Activated T-helper 1 cell treated with anti-CD3 and anti-CD28 coated beads, Interleukin-12 subunit alpha, Interleukin-12 subunit beta, Interleukin-2, Interleukin-4 antibody, amounts not matched to agents 30 ng/mL and 10 ng/mL and 1 ng/mL, durations not matched to agents 14 hours and 24 hours and 36 hours (primary cell): ENCODE measurements at regions of chr12 and their contacts with region 1.

Region 1: GRCh38 chr12:8697476-8698131 is at the start of gene RIMKLB:
- DNase-seq: peak; percentile 38
- H3K4me3 Mint-ChIP-seq: peak within 1 kb of the TSS; percentile 86
- H3K27ac Mint-ChIP-seq: peak within 1 kb of the TSS; percentile 65
- H3K4me1 Mint-ChIP-seq: peaks cover 12% of the 10 kb centered on the region
- H3K27me3 Mint-ChIP-seq: peaks cover 63% of the 10 kb centered on the region
- total RNA-seq, gene RIMKLB: 0.47 and 0.52 TPM in 2 replicates

Region 2: DNA sequence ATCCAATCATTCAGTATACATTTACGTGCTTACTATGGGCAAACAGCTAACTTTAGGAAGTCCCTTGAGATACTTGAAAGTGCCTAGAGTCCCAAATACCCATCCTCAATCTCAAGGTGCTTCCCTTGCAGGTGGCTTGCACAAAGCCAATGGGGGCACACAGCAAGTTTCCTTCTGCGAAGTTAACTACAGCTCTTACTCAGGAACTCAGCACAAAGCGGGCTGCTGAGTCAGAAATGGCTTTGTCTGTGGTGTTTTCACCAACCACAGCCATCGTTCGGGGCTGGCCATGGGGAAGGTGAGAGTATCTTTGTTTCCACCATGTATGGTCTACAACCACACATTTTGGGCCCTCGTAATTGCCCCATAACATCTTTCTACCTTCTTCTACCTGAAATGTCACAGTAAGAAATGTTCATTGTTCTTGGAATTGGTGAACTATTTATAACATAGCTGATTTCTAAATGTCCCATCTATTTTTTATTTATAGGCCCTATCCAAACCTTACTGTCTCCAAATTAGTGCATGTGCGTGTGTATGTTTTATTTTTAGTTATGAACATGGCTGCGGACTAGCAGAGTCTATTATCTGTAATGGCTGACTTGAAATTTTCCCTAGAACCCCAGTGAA is 48.9 kb before region 1 on chr12:
- intact Hi-C with region 1: loop called (anchors 2 kb)
- DNase-seq: peak; percentile 67
- H3K4me3 Mint-ChIP-seq: no peak overlapping the region
- H3K27ac Mint-ChIP-seq: peak overlapping the region; percentile 54
- H3K4me1 Mint-ChIP-seq: peaks cover 45% of the 10 kb centered on the region
- H3K27me3 Mint-ChIP-seq: peaks cover 53% of the 10 kb centered on the region

Region 3: DNA sequence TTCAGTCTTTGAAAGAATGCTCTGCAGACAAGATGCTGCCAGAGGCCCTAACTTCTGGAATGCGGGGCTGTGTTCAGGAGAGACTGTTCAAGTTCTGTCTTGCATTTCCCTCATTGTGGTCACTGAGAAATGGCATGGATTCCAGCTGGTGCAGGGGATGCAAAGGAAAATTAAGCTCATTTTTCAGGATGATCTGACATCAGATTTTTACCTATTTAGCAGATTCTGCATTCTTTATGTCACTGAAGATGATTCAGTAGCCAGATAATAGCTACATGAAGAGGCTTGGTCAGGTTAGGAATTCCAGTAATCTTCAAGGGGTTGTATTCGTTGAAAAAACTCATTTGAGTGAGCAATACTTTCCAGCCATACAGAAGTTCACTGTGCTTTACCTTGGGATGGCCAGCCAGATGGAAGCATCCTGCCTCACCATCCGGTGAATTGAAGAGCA is 18.9 kb before region 1 on chr12:
- intact Hi-C with region 1: no loop called
- DNase-seq: no peak
- H3K4me3 Mint-ChIP-seq: no peak overlapping the region
- H3K27ac Mint-ChIP-seq: no peak overlapping the region
- H3K4me1 Mint-ChIP-seq: no peaks in the 10 kb centered on the region
- H3K27me3 Mint-ChIP-seq: peaks cover 5% of the 10 kb centered on the region

Region 4: DNA sequence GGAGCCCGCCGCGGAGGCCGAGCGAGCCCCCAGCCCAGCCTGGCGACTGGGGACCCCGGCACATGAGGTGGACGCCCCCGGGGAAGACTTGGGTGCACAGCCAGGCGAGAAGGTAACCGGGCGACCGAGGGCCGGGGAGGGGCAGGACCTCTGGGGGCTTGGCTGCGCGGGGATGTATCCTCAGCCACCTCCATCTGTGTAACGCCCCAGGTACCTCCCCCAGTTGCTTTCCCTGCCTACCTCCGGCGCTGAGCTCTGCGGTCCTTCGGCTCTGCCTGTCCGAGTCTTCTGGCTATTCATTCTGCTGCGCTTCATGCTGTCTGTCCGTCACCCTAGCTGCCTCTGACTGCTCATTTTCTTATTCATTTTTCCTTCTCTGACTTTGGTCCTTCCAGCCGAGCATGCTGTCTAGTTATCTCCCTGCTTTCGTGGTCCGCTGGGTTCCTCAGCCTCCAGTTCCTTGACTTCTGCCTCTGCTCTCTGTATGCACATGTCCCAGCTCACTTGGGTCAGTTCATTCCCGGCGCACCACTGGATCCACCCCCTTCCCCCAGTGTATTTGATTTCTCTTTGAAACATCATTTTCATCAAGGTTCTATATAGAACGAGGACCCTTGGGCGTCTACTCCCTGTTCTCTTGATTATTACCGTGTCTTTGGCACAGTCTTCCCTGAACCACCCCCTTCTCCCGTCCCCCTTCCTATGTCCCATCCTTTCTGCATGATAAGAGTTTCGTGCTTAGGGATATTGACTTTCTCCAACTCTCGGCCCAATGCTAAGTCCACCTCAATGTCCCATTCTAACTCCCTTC is 217.3 kb after region 1 on chr12:
- intact Hi-C with region 1: loop called (anchors 2 kb)
- DNase-seq: peak; percentile 56
- H3K4me3 Mint-ChIP-seq: no peak overlapping the region
- H3K27ac Mint-ChIP-seq: no peak overlapping the region
- H3K4me1 Mint-ChIP-seq: peaks cover 8% of the 10 kb centered on the region
- H3K27me3 Mint-ChIP-seq: peaks cover 21% of the 10 kb centered on the region